BJ (cell line): ENCODE measurements at regions of chr1 and their contacts with region 1.

Region 1: GRCh38 chr1:152459596-152460528 is 45.8 kb upstream of the CRNN start:
- DNase-seq: no peak
- H3K4me3 ChIP-seq: no peak overlapping the region
- H3K27me3 ChIP-seq: no peaks in the 10 kb centered on the region
- CTCF ChIP-seq: peak; percentile 91

Region 2: DNA sequence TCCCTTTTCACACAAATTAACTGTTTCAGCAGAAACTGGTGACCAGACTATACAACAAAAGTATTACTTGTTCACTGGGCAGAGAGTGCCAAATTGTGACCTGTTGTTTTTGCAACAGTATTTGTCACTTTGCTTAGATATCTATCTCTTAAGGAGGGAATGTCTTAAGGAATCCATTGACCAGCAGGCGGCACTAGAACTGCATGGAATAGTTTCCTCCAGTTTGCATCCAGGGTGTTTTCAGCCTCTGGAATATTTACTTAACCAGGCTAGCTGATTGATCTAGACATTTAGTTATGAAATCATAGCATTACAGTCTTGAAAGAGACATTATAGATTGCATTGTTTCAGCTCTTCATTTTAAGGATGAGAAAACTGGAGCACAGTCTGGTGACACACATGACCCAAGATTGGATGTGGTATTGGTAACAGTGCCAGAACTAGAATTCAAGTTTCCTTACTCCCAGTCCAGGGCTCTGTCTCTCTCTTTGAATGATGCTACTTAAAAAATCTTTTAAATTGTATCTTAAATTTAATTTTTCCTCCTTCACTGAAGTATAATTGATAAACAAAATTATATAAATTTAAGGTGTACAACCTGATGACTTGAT is 317.8 kb before region 1 on chr1:
- CTCF ChIA-PET with region 1: interaction called, 17 read pairs
- POLR2A ChIA-PET with region 1: no interaction called
- DNase-seq: no peak
- H3K4me3 ChIP-seq: no peak overlapping the region
- H3K27me3 ChIP-seq: peaks cover 5% of the 10 kb centered on the region; the same call in 1 of the 2 replicates
- CTCF ChIP-seq: peak; percentile 86

Region 3: GRCh38 chr1:152347116-152347728 is 112.6 kb before region 1 on chr1:
- CTCF ChIA-PET with region 1: interaction called, 20 read pairs
- POLR2A ChIA-PET with region 1: no interaction called
- DNase-seq: peak; percentile 17
- H3K4me3 ChIP-seq: no peak overlapping the region
- H3K27me3 ChIP-seq: no peaks in the 10 kb centered on the region
- CTCF ChIP-seq: peak; percentile 86

Region 4: DNA sequence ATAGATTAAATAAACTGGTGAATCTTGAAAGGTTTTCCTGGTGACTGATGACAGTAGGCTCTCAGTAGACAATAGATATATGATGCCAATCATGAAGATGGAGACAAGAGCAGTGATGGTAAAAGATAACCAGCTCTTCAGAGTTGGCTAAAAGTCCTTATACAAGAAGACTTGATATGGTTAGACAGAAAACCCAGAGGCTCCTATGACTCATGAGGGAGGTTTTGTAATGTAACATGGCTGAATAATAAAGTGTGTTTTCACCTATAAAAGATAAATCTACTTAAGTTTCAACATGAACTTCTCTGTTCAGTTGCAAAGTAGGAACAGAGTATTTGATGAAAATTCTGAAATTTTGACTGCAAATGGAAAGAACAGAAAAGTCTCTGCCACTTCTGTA is 33.1 kb before region 1 on chr1:
- CTCF ChIA-PET with region 1: interaction called, 10 read pairs
- POLR2A ChIA-PET with region 1: no interaction called
- DNase-seq: no peak
- H3K4me3 ChIP-seq: no peak overlapping the region
- H3K27me3 ChIP-seq: no peaks in the 10 kb centered on the region
- CTCF ChIP-seq: no peak

Region 5: GRCh38 chr1:152448095-152448494 is 11.8 kb before region 1 on chr1:
- CTCF ChIA-PET with region 1: interaction called, 47 read pairs
- POLR2A ChIA-PET with region 1: no interaction called
- DNase-seq: no peak
- H3K4me3 ChIP-seq: no peak overlapping the region
- H3K27me3 ChIP-seq: peaks cover 4% of the 10 kb centered on the region
- CTCF ChIP-seq: no peak

Region 6: DNA sequence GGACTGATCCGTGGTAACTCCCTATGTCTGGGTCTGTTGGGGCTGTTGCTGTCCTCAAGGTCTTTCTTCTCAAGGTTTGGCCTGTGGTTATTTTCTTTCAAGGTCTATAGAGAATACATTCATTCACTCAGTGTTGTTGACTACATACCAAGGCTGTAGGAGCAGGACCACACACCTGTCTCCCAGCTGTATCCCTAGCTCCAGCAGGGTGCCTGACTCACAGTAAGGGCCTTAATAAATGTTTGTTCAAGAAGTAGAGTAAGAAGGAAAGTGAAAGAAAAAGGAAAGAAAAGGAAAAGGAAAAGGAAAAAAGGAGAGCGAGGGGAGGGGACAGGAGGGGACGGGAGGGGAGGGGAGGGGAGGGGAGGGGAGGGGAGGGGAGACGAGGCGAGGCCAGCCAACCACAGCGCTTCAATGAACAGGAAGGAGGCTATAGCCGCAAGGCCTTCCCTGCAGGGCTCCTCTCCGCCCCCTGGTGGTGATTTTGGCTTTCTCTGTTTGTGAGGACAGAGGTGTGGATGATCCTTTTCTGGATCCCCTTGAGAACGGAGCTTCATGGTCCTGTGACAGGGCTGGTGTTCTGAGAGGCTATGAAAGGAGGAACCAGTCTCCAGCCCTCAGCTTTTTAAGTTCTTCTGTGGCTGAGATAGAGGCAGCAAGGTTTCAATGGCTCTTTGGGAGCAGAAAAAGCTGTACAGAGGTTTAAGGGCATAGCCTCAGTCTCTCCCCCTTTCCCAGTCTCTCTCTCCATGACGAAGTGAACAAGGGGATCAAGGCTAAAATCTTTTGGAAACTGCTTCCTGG is 20.1 kb after region 1 on chr1:
- CTCF ChIA-PET with region 1: interaction called, 21 read pairs
- POLR2A ChIA-PET with region 1: no interaction called
- DNase-seq: no peak
- H3K4me3 ChIP-seq: no peak overlapping the region
- H3K27me3 ChIP-seq: no peaks in the 10 kb centered on the region
- CTCF ChIP-seq: peak; percentile 63

Region 7: GRCh38 chr1:152506899-152507498 is 47.1 kb after region 1 on chr1:
- CTCF ChIA-PET with region 1: no interaction called
- POLR2A ChIA-PET with region 1: no interaction called
- DNase-seq: no peak
- H3K4me3 ChIP-seq: no peak overlapping the region
- H3K27me3 ChIP-seq: peaks cover 2% of the 10 kb centered on the region
- CTCF ChIP-seq: no peak